Naive thymus-derived CD4-positive, alpha-beta T cell (primary cell): ENCODE measurements at regions of chr14 and their contacts with region 1.

Region 1: GRCh38 chr14:92675421-92675820 is 73.0 kb downstream of the LGMN start:
- DNase-seq: no peak
- ATAC-seq: no peak
- H3K4me3 ChIP-seq: no peak overlapping the region
- H3K4me3 Mint-ChIP-seq: peak overlapping the region in 5 of 10 donors; percentile 9 to 53 (median 26)
- H3K27ac ChIP-seq: peak overlapping the region; percentile 52
- H3K27ac Mint-ChIP-seq: peak overlapping the region in 7 of 9 donors; percentile 44 to 96 (median 84)
- H3K4me1 ChIP-seq: peaks cover 13 to 26% of the 10 kb centered on the region in 2 donors
- H3K4me1 Mint-ChIP-seq: peaks cover 36 to 71% (median 56%) of the 10 kb centered on the region in 7 donors
- H3K27me3 ChIP-seq: no peaks in the 10 kb centered on the region
- H3K27me3 Mint-ChIP-seq: no peaks in the 10 kb centered on the region

Region 2: GRCh38 chr14:92248696-92249095 is 426.7 kb before region 1 on chr14:
- CTCF ChIA-PET with region 1: no interaction called
- POLR2A ChIA-PET with region 1: no interaction called
- intact Hi-C with region 1: no loop called
- DNase-seq: no peak
- ATAC-seq: peak; percentile 67
- H3K4me3 ChIP-seq: no peak overlapping the region
- H3K4me3 Mint-ChIP-seq: no peak overlapping the region
- H3K27ac ChIP-seq: no peak overlapping the region
- H3K27ac Mint-ChIP-seq: peak overlapping the region in 1 of 9 donors; percentile 11
- H3K4me1 ChIP-seq: no peaks in the 10 kb centered on the region
- H3K4me1 Mint-ChIP-seq: peaks cover 0 to 18% (median under 1%) of the 10 kb centered on the region in 7 donors
- H3K27me3 ChIP-seq: no peaks in the 10 kb centered on the region
- H3K27me3 Mint-ChIP-seq: peaks cover 15 to 42% (median 27%) of the 10 kb centered on the region in 5 donors

Region 3: GRCh38 chr14:92659765-92660561 is 15.5 kb before region 1 on chr14:
- CTCF ChIA-PET with region 1: interaction called, 6 read pairs
- POLR2A ChIA-PET with region 1: interaction called, 10 read pairs
- intact Hi-C with region 1: no loop called
- DNase-seq: no peak
- ATAC-seq: peak; percentile 69
- H3K4me3 ChIP-seq: no peak overlapping the region
- H3K4me3 Mint-ChIP-seq: peak overlapping the region in 9 of 10 donors; percentile 12 to 100 (median 60)
- H3K27ac ChIP-seq: peak overlapping the region; percentile 90
- H3K27ac Mint-ChIP-seq: peak overlapping the region in 8 of 9 donors; percentile 64 to 99 (median 93)
- H3K4me1 ChIP-seq: peaks cover 27 to 69% of the 10 kb centered on the region in 2 donors
- H3K4me1 Mint-ChIP-seq: peaks cover 67 to 100% (median 94%) of the 10 kb centered on the region in 7 donors
- H3K27me3 ChIP-seq: no peaks in the 10 kb centered on the region
- H3K27me3 Mint-ChIP-seq: no peaks in the 10 kb centered on the region

Region 4: GRCh38 chr14:92832137-92832700 is 156.8 kb after region 1 on chr14:
- CTCF ChIA-PET with region 1: no interaction called
- POLR2A ChIA-PET with region 1: no interaction called
- intact Hi-C with region 1: no loop called
- DNase-seq: no peak
- ATAC-seq: no peak
- H3K4me3 ChIP-seq: no peak overlapping the region
- H3K4me3 Mint-ChIP-seq: no peak overlapping the region
- H3K27ac ChIP-seq: no peak overlapping the region
- H3K27ac Mint-ChIP-seq: peak overlapping the region in 3 of 9 donors; percentile 7 to 38 (median 10)
- H3K4me1 ChIP-seq: no peaks in the 10 kb centered on the region
- H3K4me1 Mint-ChIP-seq: peaks cover 0 to 1% (median 0%) of the 10 kb centered on the region in 7 donors
- H3K27me3 ChIP-seq: no peaks in the 10 kb centered on the region
- H3K27me3 Mint-ChIP-seq: no peaks in the 10 kb centered on the region